SK-N-SH (cell line): ENCODE measurements at regions of chr2 and their contacts with region 1.

Region 1: DNA sequence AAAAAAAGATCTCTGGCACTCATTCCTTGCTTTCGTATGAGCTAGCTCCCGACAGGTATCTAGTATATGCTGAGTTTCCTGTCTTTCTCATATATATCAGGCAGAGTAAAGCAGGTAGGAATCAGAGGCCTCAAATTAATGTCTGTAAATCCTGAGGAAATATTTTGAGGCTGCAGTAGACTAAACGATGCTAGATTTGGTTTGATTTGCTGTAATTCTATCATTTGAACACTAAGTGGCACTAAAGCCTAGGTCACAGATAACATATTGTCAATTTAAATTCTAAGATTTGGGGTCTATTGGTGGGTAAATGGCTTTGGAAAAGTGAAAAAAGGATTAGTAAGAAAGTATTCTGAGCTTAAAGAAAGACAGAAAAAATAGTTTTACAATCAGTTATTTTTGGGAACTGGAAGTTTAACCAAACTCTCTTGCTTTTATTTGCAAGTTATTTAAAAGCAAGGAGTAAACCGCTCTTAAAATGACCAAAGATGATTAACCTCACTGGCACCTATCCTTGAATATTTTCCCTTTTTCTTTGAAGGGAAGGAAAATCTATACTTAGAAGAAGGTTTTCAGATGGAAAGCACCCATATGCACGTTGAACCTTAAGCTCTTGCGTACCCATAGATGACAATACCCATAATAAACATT is 37.6 kb upstream of the SLC4A10 start:
- DNase-seq: peak; percentile 27
- H3K4me3 ChIP-seq: no peak overlapping the region
- H3K27ac ChIP-seq: no peak overlapping the region
- H3K4me1 ChIP-seq: no peaks in the 10 kb centered on the region
- H3K27me3 ChIP-seq: no peaks in the 10 kb centered on the region
- CTCF ChIP-seq: peak; percentile 83
- EP300 ChIP-seq: no peak
- RAD21 ChIP-seq: peak; percentile 78

Region 2: DNA sequence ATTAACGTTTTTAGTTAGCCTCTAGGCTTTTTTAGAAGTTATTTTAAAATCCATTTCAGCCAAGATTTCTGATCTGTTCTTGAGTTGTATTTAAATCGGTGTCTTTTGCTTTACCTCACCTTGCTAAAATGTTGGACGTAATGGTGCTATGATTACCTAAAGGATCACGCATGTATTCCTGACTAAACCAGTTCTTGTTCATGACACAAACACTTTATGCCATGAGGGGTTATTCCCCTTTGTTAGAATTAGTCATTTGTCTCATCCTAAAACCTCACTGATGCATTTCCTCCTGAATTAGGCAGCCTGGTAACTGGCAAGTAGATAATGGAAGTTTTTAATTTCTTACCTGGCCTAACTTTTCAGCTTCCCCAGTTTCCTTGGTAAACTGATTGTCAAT is 611.8 kb before region 1 on chr2:
- CTCF ChIA-PET with region 1: no interaction called
- POLR2A ChIA-PET with region 1: no interaction called
- DNase-seq: no peak
- H3K4me3 ChIP-seq: no peak overlapping the region
- H3K27ac ChIP-seq: no peak overlapping the region
- H3K4me1 ChIP-seq: peaks cover 0 to 6% of the 10 kb centered on the region in 2 experiments; a peak in 3 of 4 replicates
- H3K27me3 ChIP-seq: no peaks in the 10 kb centered on the region
- CTCF ChIP-seq: no peak
- EP300 ChIP-seq: no peak
- RAD21 ChIP-seq: no peak

Region 3: DNA sequence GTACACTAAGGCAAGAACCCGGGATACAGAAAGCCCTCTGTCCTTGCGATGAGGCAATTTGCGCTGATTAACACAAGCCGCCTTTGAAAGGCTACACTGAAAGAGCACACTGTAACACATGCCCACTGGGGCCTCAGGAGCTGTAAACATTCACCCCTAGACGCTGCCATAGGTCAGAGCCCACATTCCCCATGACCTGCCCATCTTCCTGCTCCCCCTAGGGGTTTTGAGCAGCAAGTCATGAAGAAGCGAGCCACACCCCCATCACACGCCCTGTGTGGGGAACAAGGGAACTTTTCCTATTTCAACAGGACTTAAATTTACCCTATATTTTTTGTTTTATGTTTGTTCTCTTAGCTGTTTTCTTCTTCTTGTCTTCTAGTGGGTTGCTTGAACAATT is 10.2 kb before region 1 on chr2:
- CTCF ChIA-PET with region 1: interaction called, 10 read pairs
- POLR2A ChIA-PET with region 1: no interaction called
- DNase-seq: peak; percentile 39
- H3K4me3 ChIP-seq: no peak overlapping the region
- H3K27ac ChIP-seq: no peak overlapping the region
- H3K4me1 ChIP-seq: no peaks in the 10 kb centered on the region
- H3K27me3 ChIP-seq: no peaks in the 10 kb centered on the region
- CTCF ChIP-seq: peak; percentile 44; the same call in 1 of the 2 replicates
- EP300 ChIP-seq: no peak
- RAD21 ChIP-seq: 0 out of 2 replicates have a peak, but pooled peaks have one; percentile 12

Region 4: GRCh38 chr2:161946489-161947107 is 360.0 kb after region 1 on chr2:
- CTCF ChIA-PET with region 1: interaction called, 60 read pairs
- POLR2A ChIA-PET with region 1: no interaction called
- DNase-seq: no peak
- H3K4me3 ChIP-seq: no peak overlapping the region; a peak in 1 of 4 replicates
- H3K27ac ChIP-seq: no peak overlapping the region
- H3K4me1 ChIP-seq: no peaks in the 10 kb centered on the region
- H3K27me3 ChIP-seq: 0 out of 2 replicates have a peak, but pooled peaks cover 11% of the 10 kb centered on the region
- CTCF ChIP-seq: peak; percentile 71
- EP300 ChIP-seq: no peak
- RAD21 ChIP-seq: peak; percentile 68

Region 5: DNA sequence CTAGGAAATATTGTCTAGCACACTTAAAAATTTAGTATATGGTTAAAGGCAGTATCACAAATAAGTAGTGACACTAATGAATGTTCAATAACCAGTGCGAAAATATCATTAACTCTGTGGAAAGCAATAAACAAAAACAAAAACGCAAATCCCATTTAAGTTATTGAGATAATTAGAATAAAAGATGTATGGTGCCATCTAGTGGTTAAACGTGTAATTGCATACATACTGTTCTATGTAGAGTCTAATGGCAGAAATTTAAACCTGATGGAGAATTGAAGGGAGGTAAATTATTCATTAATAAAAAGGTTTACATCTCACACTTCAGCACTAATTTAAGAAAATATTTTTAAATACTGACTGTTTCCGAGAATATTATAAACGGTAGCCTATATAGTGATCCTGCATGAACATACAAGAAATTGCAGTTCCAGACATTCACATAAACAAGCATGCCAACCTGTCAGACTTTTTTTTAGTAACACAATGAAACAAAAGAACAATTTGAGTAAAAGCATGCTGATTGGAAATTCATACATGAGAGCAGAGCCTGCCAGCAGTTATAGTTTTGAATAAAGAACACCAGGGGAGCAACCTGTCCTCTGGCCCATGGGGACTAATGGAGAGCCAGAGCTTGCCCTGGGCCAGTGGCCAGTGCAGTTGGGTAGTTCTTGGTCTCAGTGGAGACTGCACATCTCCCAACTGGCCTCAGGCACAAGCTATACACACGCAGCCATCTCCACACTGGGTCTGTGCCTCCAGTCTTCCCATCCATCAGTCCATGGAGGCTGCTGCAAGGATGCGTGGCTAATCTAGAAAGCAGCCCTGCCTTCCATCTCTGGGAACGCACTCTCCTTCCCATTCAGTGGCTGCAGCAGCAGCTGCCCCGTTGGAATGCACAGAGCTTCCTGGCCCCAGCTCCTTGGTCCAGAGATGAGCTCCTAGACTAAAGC is 537.4 kb after region 1 on chr2:
- CTCF ChIA-PET with region 1: interaction called, 26 read pairs
- POLR2A ChIA-PET with region 1: no interaction called
- DNase-seq: peak; percentile 42
- H3K4me3 ChIP-seq: no peak overlapping the region
- H3K27ac ChIP-seq: no peak overlapping the region
- H3K4me1 ChIP-seq: no peaks in the 10 kb centered on the region
- H3K27me3 ChIP-seq: no peaks in the 10 kb centered on the region
- CTCF ChIP-seq: peak; percentile 86
- EP300 ChIP-seq: no peak
- RAD21 ChIP-seq: peak; percentile 68